Endothelial cell of umbilical vein (primary cell): ENCODE measurements at regions of chr18 and their contacts with region 1.

Region 1: DNA sequence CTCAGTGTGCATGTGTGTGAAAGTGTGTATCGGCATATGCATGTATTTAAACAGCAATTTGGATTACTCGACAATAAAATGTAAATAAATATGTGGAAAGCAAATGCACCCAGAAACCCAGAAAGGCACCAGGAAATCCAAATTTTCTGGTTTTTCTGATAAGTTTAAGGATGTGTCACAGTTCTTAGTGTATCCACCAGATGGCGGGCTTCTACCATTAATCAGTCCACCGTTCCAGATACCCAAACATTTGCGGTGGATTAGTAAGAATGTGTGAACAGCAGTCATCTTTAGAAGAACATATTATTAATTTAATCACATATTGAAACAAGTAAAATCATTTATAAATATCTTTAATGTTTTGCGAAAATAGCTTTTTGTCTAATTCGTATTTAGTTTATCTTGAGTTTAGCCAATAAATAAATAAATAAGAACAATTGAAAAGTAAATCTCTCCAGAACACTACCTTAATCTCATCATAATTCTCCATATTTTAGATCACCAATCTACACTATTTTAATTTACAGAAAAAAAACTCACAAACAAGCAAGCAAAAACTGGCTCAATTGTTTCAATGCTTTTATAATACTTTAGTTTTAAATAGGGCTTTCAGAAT is 298.9 kb downstream of the DSEL start:
- DNase-seq: peak; percentile 70
- H3K4me3 ChIP-seq: no peak overlapping the region
- H3K27ac ChIP-seq: no peak overlapping the region
- H3K4me1 ChIP-seq: no peaks in the 10 kb centered on the region
- H3K27me3 ChIP-seq: no peaks in the 10 kb centered on the region
- CTCF ChIP-seq: peak; percentile 41 to 47
- POLR2A ChIP-seq: no peak

Region 2: DNA sequence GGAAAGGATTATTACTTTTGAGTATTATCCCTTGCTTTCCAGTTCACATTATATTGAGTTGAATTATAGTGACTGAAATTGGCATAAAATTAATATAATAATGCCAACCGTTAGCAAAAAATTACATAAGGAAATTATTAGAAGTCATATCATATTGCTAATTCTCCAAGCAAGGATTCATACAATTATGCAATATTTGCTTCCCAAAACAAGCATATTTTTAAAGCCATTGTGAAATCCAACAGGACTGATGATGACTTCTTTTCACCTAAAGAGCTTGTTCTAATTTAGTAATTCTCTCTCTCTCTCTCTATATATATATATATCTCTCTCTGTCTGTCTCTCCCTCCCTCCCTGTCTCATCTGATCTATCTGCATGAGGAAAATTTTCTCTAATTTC is 15.3 kb after region 1 on chr18:
- CTCF ChIA-PET with region 1: no interaction called
- POLR2A ChIA-PET with region 1: no interaction called
- dilution Hi-C with region 1: no loop called
- intact Hi-C with region 1: no loop called
- DNase-seq: no peak
- H3K4me3 ChIP-seq: no peak overlapping the region
- H3K27ac ChIP-seq: peak overlapping the region; percentile 81
- H3K4me1 ChIP-seq: peaks cover 8% of the 10 kb centered on the region
- H3K27me3 ChIP-seq: no peaks in the 10 kb centered on the region
- CTCF ChIP-seq: no peak
- POLR2A ChIP-seq: no peak

Region 3: DNA sequence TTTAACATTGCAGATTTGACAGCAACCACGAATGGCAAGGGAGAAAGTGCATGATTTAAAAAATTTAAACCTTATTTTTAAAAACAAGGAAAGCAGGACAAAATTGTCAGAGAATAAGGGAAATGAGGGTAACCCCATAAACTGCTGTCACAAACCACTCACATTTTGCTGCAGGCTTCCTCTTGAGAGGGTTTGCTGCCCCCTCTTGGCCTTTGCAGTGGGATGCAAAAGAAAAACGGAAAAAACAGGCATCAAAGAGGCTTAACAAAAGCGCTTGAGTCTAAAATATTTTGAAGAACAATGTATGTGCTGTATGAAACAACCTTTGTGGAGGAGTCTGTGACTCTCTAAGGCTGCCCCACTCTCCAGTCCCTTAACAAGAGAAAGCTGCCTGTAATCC is 1405.7 kb after region 1 on chr18:
- CTCF ChIA-PET with region 1: no interaction called
- POLR2A ChIA-PET with region 1: no interaction called
- dilution Hi-C with region 1: no loop called
- intact Hi-C with region 1: loop called (anchors 1 kb)
- DNase-seq: peak; percentile 72
- H3K4me3 ChIP-seq: no peak overlapping the region
- H3K27ac ChIP-seq: no peak overlapping the region
- H3K4me1 ChIP-seq: no peaks in the 10 kb centered on the region
- H3K27me3 ChIP-seq: no peaks in the 10 kb centered on the region
- CTCF ChIP-seq: peak; percentile 62 to 70
- POLR2A ChIP-seq: no peak

Region 4: DNA sequence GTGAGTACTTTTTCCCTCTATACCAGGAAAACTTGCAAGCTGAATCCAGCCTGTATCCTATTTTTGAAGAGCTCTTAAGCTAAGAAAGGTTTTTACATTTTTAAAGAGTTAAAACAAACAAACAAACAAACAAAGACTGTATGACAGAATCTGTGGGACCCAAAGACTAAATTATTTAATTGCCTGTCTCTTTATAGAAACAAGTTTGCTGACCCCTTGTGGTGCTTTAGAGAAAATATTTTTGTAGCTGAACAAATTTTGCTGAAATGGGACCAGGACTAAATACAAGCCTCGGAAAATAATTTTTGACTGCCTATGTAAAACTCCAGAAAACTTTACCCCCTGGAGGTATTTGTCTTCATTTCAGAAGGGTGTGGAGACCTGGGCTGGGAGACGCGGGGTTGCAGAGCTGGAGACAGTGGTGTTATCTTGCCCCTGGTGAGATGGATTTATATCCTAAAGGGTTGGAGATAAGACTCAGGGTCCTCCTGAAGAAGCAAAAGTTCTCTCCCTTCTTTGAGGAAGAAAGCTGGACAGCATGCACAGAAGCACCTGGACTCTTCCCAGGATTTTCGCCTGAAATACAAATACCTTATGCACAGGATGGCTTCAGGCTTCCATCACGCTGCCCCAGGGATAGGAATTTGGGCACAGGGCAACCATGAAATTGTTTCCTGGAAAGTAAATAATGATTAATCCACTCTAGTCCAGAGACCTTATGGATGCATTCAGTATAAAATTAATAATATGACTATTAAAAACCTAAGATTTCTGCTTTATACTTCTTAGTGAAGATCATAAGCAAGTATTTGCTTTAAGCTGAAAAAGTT is 1442.9 kb after region 1 on chr18:
- CTCF ChIA-PET with region 1: interaction called, 34 read pairs
- POLR2A ChIA-PET with region 1: no interaction called
- dilution Hi-C with region 1: no loop called
- intact Hi-C with region 1: loop called (anchors 1 kb)
- DNase-seq: peak; percentile 42
- H3K4me3 ChIP-seq: no peak overlapping the region
- H3K27ac ChIP-seq: no peak overlapping the region
- H3K4me1 ChIP-seq: no peaks in the 10 kb centered on the region
- H3K27me3 ChIP-seq: peaks cover 0 to 1% of the 10 kb centered on the region in 2 experiments
- CTCF ChIP-seq: peak; percentile 24 to 32
- POLR2A ChIP-seq: no peak

Region 5: DNA sequence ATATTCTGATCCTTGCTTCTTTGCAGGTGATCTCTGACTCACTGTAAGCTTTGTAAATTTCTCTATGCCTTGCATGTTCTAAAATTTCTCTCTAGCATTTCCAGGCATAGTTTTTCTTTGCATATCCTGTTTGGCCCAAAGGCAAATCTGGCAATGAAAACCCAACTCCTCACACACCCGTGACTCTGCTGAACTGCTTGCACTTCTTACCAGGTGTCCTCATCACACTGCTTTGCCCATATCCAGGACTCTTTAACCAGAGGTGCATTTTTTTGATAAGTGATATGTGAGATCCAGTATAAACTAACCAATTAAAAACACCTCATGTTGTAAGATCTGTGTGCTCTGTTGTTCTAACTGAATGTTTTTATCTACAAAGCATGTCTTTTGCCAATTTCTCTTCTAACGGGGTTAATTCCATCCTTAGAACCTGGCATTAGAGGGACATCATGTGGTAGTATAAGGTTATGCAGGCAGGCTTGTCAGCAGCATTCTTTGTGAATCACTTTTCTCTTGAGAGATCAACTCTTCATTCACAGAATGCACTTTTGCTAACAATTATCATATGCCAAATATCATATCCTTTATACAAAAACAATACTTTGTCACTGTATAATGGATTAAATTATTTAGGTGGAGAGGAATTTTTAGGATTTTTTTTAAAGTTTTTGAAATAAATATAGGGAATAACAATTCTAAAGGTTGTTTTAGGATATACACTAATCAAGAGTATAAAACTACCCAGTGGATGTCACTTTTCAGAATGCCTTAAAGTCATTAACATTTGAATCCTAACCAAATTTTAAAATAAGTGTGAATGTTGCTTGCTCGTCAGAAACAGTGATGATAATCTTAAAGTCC is 1518.1 kb after region 1 on chr18:
- CTCF ChIA-PET with region 1: no interaction called
- POLR2A ChIA-PET with region 1: no interaction called
- dilution Hi-C with region 1: no loop called
- intact Hi-C with region 1: loop called (anchors 1 kb)
- DNase-seq: peak; percentile 61
- H3K4me3 ChIP-seq: no peak overlapping the region
- H3K27ac ChIP-seq: no peak overlapping the region
- H3K4me1 ChIP-seq: no peaks in the 10 kb centered on the region
- H3K27me3 ChIP-seq: no peaks in the 10 kb centered on the region
- CTCF ChIP-seq: peak; percentile 36 to 58
- POLR2A ChIP-seq: no peak

Region 6: DNA sequence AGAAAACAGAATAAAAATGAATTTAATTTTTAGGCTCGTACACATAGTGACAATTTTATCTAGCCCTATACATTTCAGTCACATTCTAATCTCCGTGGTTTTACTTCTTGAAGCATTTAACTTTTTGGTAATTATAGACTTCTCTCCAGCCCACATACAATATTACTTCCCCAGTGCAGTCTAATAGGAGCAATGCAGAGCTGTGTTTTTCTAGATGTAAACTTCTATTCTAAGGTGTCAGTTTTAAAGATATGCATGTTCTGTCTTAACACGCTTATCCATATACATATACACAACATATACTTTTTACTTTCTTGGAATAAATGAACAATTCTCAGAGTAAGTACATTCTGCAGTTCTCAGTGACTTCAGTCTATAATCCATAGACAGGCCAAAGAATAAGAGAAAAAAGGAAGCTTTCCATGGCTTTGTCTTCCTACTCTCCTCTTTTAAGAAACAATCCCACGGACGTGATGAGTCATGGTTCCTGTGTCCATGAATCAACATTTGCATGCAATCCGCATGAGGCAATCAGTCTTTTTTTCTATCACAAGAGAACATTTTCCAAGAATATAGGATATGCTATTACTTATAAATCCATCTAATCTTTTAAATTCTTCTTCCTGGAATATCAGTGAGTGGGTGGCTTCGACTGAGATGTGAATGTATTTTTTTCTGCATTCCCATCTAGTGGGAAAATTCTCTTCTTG is 1623.0 kb after region 1 on chr18:
- CTCF ChIA-PET with region 1: no interaction called
- POLR2A ChIA-PET with region 1: no interaction called
- dilution Hi-C with region 1: no loop called
- intact Hi-C with region 1: loop called (anchors 5 kb)
- DNase-seq: peak; percentile 95
- H3K4me3 ChIP-seq: no peak overlapping the region
- H3K27ac ChIP-seq: peak overlapping the region; percentile 69
- H3K4me1 ChIP-seq: peaks cover 14% of the 10 kb centered on the region
- H3K27me3 ChIP-seq: no peaks in the 10 kb centered on the region
- CTCF ChIP-seq: no peak
- POLR2A ChIP-seq: no peak